PC-3 (cell line): ENCODE measurements at regions of chr7 and their contacts with region 1.

Region 1: GRCh38 chr7:143416565-143417149 is 8.0 kb upstream of the EPHA1 start:
- DNase-seq: peak; percentile 80
- ATAC-seq: peak; percentile 25; the same call in 1 of the 2 replicates
- H3K4me3 ChIP-seq: peak overlapping the region; percentile 56; the same call in 1 of the 2 replicates
- H3K27ac ChIP-seq: peak overlapping the region; percentile 89
- H3K4me1 ChIP-seq: peaks cover 32% of the 10 kb centered on the region
- H3K27me3 ChIP-seq: no peaks in the 10 kb centered on the region
- CTCF ChIP-seq: peak; percentile 86

Region 2: GRCh38 chr7:143008007-143008901 is 408.4 kb before region 1 on chr7:
- CTCF ChIA-PET with region 1: no interaction called
- POLR2A ChIA-PET with region 1: no interaction called
- intact Hi-C with region 1: loop called (anchors 10 kb)
- DNase-seq: peak; percentile 81
- ATAC-seq: peak; percentile 84
- H3K4me3 ChIP-seq: no peak overlapping the region
- H3K27ac ChIP-seq: no peak overlapping the region
- H3K4me1 ChIP-seq: peaks cover under 1% of the 10 kb centered on the region
- H3K27me3 ChIP-seq: peaks cover 31% of the 10 kb centered on the region
- CTCF ChIP-seq: peak; percentile 87

Region 3: DNA sequence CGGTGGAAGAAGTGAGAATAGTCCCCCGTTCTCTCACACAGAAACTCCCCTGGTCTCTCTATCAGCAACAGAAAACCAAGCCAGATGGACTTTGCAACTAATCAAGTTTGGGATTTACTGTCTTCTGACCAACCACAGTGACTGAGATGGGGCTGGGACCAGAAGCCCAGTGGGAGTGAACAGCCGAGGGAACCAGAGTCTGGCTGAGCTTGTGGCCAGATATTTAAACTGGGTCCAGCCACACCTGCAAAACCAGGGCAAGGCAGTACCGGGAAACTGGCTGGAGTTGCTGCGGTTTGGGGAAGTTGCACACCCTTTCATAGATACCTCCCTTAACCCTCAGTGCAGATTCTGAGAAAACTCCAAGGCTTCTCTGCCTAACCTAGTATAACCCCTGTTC is 147.4 kb before region 1 on chr7:
- CTCF ChIA-PET with region 1: no interaction called
- POLR2A ChIA-PET with region 1: no interaction called
- intact Hi-C with region 1: no loop called
- DNase-seq: no peak
- ATAC-seq: no peak
- H3K4me3 ChIP-seq: no peak overlapping the region
- H3K27ac ChIP-seq: no peak overlapping the region
- H3K4me1 ChIP-seq: peaks cover 7% of the 10 kb centered on the region
- H3K27me3 ChIP-seq: no peaks in the 10 kb centered on the region
- CTCF ChIP-seq: no peak

Region 4: DNA sequence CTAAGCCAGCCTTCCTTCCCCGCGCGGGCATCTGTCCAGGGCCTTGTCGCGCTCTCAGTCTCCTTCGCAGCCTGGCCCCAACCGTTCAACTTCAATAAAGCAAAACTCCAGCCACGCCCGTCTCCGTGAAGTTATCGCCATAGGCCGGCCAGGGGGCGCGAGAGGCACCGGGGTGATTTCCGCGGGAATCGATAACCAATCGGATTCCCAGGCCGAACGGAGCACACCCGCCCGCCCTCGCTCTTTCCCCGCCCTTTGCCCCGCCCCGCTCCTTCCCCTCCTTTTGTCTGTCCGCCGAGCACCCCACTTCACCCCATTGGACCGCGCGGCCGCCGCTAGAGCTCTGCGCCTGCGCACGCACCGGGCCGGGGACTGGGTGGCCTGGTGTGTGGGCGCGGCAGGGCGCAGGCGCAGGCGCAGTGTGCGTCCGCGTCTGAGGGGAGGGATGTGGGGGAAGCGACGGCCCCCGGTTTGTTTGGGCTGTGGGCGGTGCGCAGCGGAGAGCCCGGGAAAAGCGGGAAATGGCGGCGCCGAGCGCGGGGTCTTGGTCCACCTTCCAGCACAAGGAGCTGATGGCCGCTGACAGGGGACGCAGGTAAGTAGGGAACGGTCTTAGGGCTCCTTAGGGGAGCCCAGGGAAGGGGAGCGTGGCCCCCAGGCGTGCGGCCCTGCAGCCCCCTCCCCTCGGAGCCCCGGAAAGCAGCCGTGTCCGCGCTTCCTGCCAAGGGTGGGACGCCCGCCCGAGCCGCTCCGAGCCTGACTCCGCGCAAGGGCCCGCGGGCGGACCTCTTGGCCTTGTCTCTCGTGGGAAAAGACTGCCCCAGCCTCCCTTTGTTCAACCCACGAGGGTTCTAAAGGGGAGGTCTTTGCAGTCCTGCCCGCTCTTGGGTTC is 128.5 kb before region 1 on chr7 and contains the start of gene CASP2:
- CTCF ChIA-PET with region 1: no interaction called
- POLR2A ChIA-PET with region 1: interaction called, 34 read pairs
- intact Hi-C with region 1: no loop called
- DNase-seq: peak; percentile 92
- ATAC-seq: peak; percentile 71
- H3K4me3 ChIP-seq: peak within 1 kb of the TSS; percentile 95
- H3K27ac ChIP-seq: peak within 1 kb of the TSS; percentile 87
- H3K4me1 ChIP-seq: peaks cover 47% of the 10 kb centered on the region
- H3K27me3 ChIP-seq: no peaks in the 10 kb centered on the region
- CTCF ChIP-seq: 0 out of 2 replicates have a peak, but pooled peaks have one; percentile 13
- total RNA-seq, gene CASP2: 25.1 and 26.4 TPM in 2 replicates

Region 5: DNA sequence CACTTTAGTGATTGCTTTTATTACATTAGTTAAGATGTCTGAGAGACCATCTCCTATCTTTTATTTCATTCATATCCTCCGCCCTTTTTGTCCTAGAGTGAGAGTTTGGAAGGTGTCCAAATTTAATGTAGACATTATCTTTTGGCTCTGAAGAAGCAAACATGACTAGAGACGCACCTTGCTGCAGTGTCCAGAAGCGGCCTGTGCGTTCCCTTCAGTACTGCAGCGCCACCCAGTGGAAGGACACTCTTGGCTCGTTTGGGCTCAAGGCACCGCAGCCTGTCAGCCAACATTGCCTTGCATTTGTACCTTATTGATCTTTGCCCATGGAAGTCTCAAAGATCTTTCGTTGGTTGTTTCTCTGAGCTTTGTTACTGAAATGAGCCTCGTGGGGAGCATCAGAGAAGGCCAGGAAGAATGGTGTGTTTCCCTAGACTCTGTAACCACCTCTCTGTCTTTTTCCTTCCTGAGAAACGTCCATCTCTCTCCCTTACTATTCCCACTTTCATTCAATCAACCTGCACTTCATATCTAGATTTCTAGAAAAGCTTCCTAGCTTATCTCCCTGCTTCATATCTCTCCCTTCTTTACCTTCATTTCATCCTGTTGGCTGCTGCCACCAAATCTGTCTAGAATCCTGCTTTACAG is 111.1 kb before region 1 on chr7:
- CTCF ChIA-PET with region 1: no interaction called
- POLR2A ChIA-PET with region 1: no interaction called
- intact Hi-C with region 1: loop called (anchors 2 kb)
- DNase-seq: peak; percentile 85
- ATAC-seq: peak; percentile 65
- H3K4me3 ChIP-seq: no peak overlapping the region
- H3K27ac ChIP-seq: no peak overlapping the region
- H3K4me1 ChIP-seq: peaks cover 18% of the 10 kb centered on the region
- H3K27me3 ChIP-seq: no peaks in the 10 kb centered on the region
- CTCF ChIP-seq: peak; percentile 94

Region 6: DNA sequence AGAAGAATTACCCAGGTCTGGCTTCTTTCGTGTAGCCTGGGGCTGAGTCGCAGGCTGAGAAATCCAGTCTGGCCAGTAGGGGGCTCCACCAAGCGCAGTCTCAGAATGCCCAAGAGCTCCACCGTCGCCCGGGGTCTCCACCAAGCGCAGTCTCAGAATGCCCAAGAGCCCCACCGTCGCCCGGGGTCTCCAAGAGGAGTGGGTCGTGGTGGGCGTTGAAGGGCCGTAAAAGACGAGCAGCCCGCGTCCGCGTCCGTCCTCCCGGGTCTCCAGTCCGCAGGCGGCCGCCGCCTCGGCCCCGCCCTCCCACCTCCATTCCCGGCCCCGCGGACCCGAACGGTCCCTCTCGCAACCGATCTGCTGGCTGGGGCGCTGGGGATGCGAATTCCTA is 36.4 kb before region 1 on chr7:
- CTCF ChIA-PET with region 1: interaction called, 12 read pairs
- POLR2A ChIA-PET with region 1: no interaction called
- intact Hi-C with region 1: loop called (anchors 5 kb)
- DNase-seq: peak; percentile 79
- ATAC-seq: peak; percentile 34
- H3K4me3 ChIP-seq: peak overlapping the region; percentile 96
- H3K27ac ChIP-seq: peak overlapping the region; percentile 95
- H3K4me1 ChIP-seq: peaks cover 55% of the 10 kb centered on the region
- H3K27me3 ChIP-seq: no peaks in the 10 kb centered on the region
- CTCF ChIP-seq: peak; percentile 87

Region 7: DNA sequence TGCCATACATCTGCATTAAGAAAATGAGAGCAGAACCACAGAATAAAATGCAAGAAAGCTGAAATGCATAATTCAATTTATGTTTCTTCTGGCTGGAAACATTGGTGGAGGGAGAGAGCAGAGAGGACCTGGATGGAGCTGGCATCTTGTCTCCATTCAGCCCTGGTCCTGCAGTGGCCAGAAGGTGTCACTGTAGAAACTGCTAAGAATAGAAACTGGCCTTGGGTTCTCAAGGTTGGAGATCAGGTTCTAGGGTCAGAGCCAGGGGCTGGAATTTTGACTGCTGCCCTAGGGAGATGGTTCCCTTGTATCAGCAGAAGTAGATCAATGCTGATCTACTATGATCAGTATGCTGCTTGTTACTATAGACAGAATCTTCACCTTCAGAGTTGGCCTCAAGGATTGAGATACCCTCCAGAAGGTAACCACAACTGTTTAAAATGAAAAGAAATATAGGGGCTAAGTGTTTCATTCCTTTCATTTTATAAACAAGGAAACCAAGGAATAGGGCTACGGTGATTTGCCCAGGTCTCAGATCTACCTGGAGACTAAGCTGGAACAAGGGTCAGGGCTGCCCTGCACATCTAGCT is 74.2 kb after region 1 on chr7:
- CTCF ChIA-PET with region 1: no interaction called
- POLR2A ChIA-PET with region 1: no interaction called
- intact Hi-C with region 1: loop called (anchors 5 kb)
- DNase-seq: peak; percentile 39
- ATAC-seq: peak; percentile 82
- H3K4me3 ChIP-seq: no peak overlapping the region
- H3K27ac ChIP-seq: no peak overlapping the region
- H3K4me1 ChIP-seq: no peaks in the 10 kb centered on the region
- H3K27me3 ChIP-seq: no peaks in the 10 kb centered on the region
- CTCF ChIP-seq: peak; percentile 73